ENCODE measurements at regions of chr1 and their contacts with region 1.

Region 1: GRCh38 chr1:212857992-212858460 is at the start of gene FLVCR1:
- DNase-seq: peak; percentile 99 to 100 (median 100)
- ATAC-seq: peak; percentile 96
- H3K4me3 ChIP-seq: peak within 1 kb of the TSS; percentile 69
- H3K27ac ChIP-seq: peak within 1 kb of the TSS; percentile 85
- H3K4me1 ChIP-seq: peaks cover 29 to 31% of the 10 kb centered on the region in 2 experiments; a peak in 4 of 5 replicates
- H3K27me3 ChIP-seq: no peaks in the 10 kb centered on the region
- CTCF ChIP-seq: peak in 1 of 3 experiments; percentile 1; a peak in 1 of 6 replicates
- EP300 ChIP-seq: peak; percentile 6; the same call in 1 of the 2 replicates
- POLR2A ChIP-seq: peak; percentile 91
- RAD21 ChIP-seq: no peak
- polyA plus RNA-seq, gene FLVCR1: 5.2 to 5.6 TPM

Region 2: GRCh38 chr1:212691561-212692071 is 166.4 kb before region 1 on chr1:
- CTCF ChIA-PET with region 1: no interaction called
- POLR2A ChIA-PET with region 1: no interaction called
- in situ Hi-C with region 1: no loop called
- intact Hi-C with region 1: no loop called
- DNase-seq: no peak
- ATAC-seq: no peak
- H3K4me3 ChIP-seq: no peak overlapping the region
- H3K27ac ChIP-seq: no peak overlapping the region
- H3K4me1 ChIP-seq: peaks cover 0 to 1% of the 10 kb centered on the region in 2 experiments; a peak in 2 of 5 replicates
- H3K27me3 ChIP-seq: peaks cover 69 to 86% of the 10 kb centered on the region in 2 experiments
- CTCF ChIP-seq: no peak
- EP300 ChIP-seq: no peak
- POLR2A ChIP-seq: no peak
- RAD21 ChIP-seq: no peak

Region 3: DNA sequence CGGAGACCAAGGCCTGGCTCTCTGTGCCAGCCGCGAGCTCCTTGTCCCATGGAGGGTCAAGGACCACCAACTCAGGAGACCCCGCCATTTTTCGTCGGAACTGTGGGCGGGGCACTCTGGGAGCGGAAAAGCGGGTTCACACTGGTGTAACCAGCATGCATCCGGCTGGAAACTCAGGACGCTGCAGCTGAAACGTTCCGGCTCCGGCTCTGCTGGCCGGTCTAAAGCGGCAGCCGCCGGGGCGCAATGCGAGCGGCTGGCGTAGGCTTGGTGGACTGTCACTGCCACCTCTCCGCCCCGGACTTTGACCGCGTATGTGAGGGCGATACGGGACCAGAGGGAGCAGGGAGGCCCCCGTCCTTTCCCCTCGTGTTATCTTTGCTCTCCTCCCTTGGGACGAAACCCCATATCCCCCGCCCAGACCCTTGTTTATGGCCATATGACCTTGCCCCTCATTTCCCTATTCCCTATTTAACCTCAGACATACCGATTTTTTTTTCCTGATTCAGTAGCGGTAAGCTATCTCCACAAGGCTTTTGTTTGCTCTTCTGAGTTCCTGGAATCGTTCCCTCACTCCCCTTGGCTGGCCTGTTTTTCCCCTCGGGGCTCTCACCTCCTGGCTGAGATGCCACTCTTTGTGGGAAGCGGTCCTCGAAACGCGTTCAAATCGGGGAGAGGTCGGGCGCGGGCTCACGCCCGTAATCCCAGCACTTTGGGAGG is 66.2 kb before region 1 on chr1 and contains the starts of genes NSL1 and TATDN3:
- CTCF ChIA-PET with region 1: no interaction called
- POLR2A ChIA-PET with region 1: interaction called, 4 read pairs
- in situ Hi-C with region 1: no loop called
- intact Hi-C with region 1: loop called (anchors 1 kb)
- DNase-seq: peak; percentile 75 to 98 (median 80)
- ATAC-seq: peak; percentile 84
- H3K4me3 ChIP-seq: peak within 1 kb of the TSS; percentile 72
- H3K27ac ChIP-seq: peak within 1 kb of the TSS; percentile 92
- H3K4me1 ChIP-seq: peaks cover 17 to 30% of the 10 kb centered on the region in 2 experiments
- H3K27me3 ChIP-seq: no peaks in the 10 kb centered on the region
- CTCF ChIP-seq: peak in 1 of 3 experiments; percentile 21; a peak in 2 of 6 replicates
- EP300 ChIP-seq: peak; percentile 70
- POLR2A ChIP-seq: peak; percentile 98
- RAD21 ChIP-seq: peak in 1 of 2 experiments; percentile 8; a peak in 1 of 4 replicates
- polyA plus RNA-seq, gene NSL1: 85.9 to 105 TPM
- polyA plus RNA-seq, gene TATDN3: 68.1 to 79.9 TPM

Region 4: DNA sequence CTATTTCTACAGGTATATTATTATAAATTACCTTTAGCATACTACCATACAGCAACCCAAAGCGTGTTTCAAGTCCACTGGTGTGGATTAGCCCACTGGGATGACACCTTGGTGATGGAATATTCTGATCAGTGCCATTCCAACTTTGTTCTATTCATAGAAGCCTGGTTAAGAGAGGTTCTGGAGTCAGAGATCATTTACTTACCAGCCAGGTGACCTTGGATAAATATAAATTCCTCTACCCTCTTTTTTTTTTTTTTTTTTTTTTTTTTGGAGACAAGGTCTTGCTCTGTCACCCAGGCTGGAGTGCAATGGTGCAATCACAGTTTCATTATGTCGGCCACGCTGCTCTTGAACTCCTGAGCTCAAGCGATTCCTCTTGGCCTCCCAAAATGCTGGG is 10.5 kb before region 1 on chr1 and contains the start of gene SPATA45:
- CTCF ChIA-PET with region 1: no interaction called
- POLR2A ChIA-PET with region 1: interaction called, 12 read pairs
- in situ Hi-C with region 1: no loop called
- intact Hi-C with region 1: no loop called
- DNase-seq: no peak
- ATAC-seq: no peak
- H3K4me3 ChIP-seq: no peak within 1 kb of the TSS
- H3K27ac ChIP-seq: no peak within 1 kb of the TSS
- H3K4me1 ChIP-seq: no peaks in the 10 kb centered on the region
- H3K27me3 ChIP-seq: no peaks in the 10 kb centered on the region
- CTCF ChIP-seq: no peak
- EP300 ChIP-seq: no peak
- POLR2A ChIP-seq: no peak
- RAD21 ChIP-seq: no peak
- polyA plus RNA-seq, gene SPATA45: not detected

Region 5: GRCh38 chr1:212873518-212873917 is 15.5 kb after region 1 on chr1:
- CTCF ChIA-PET with region 1: no interaction called
- POLR2A ChIA-PET with region 1: interaction called, 14 read pairs
- in situ Hi-C with region 1: no loop called
- intact Hi-C with region 1: no loop called
- DNase-seq: no peak
- ATAC-seq: no peak
- H3K4me3 ChIP-seq: no peak overlapping the region
- H3K27ac ChIP-seq: no peak overlapping the region
- H3K4me1 ChIP-seq: no peaks in the 10 kb centered on the region
- H3K27me3 ChIP-seq: no peaks in the 10 kb centered on the region
- CTCF ChIP-seq: no peak
- EP300 ChIP-seq: no peak
- POLR2A ChIP-seq: no peak
- RAD21 ChIP-seq: no peak

Region 6: GRCh38 chr1:213122514-213122929 is 264.5 kb after region 1 on chr1:
- CTCF ChIA-PET with region 1: no interaction called
- POLR2A ChIA-PET with region 1: no interaction called
- in situ Hi-C with region 1: no loop called
- intact Hi-C with region 1: no loop called
- DNase-seq: peak; percentile 19 to 77 (median 26)
- ATAC-seq: 0 out of 3 replicates have a peak, but pooled peaks have one; percentile 21
- H3K4me3 ChIP-seq: no peak overlapping the region
- H3K27ac ChIP-seq: peak overlapping the region; percentile 10; the same call in 2 of the 3 replicates
- H3K4me1 ChIP-seq: peaks cover 0 to 31% of the 10 kb centered on the region in 2 experiments
- H3K27me3 ChIP-seq: no peaks in the 10 kb centered on the region
- CTCF ChIP-seq: peak in 2 of 3 experiments; percentile 29 to 70; a peak in 4 of 6 replicates
- EP300 ChIP-seq: no peak
- POLR2A ChIP-seq: no peak
- RAD21 ChIP-seq: peak; percentile 45 to 66

Measured in K562 (cell line).